ENCODE measurements at regions of chr3 and their contacts with region 1.

Region 1: GRCh38 chr3:157088601-157089454 is 71.1 kb downstream of the CCNL1 start:
- DNase-seq: peak; percentile 95
- ATAC-seq: peak; percentile 96
- H3K4me3 Mint-ChIP-seq: peak overlapping the region; percentile 80
- H3K27ac Mint-ChIP-seq: peak overlapping the region; percentile 94
- H3K4me1 Mint-ChIP-seq: peaks cover 51% of the 10 kb centered on the region
- H3K27me3 Mint-ChIP-seq: no peaks in the 10 kb centered on the region

Region 2: GRCh38 chr3:157021684-157022083 is 67.1 kb before region 1 on chr3:
- CTCF ChIA-PET with region 1: no interaction called
- POLR2A ChIA-PET with region 1: no interaction called
- DNase-seq: no peak
- ATAC-seq: no peak
- H3K4me3 Mint-ChIP-seq: no peak overlapping the region
- H3K27ac Mint-ChIP-seq: no peak overlapping the region
- H3K4me1 Mint-ChIP-seq: peaks cover 8% of the 10 kb centered on the region
- H3K27me3 Mint-ChIP-seq: peaks cover 4% of the 10 kb centered on the region

Region 3: DNA sequence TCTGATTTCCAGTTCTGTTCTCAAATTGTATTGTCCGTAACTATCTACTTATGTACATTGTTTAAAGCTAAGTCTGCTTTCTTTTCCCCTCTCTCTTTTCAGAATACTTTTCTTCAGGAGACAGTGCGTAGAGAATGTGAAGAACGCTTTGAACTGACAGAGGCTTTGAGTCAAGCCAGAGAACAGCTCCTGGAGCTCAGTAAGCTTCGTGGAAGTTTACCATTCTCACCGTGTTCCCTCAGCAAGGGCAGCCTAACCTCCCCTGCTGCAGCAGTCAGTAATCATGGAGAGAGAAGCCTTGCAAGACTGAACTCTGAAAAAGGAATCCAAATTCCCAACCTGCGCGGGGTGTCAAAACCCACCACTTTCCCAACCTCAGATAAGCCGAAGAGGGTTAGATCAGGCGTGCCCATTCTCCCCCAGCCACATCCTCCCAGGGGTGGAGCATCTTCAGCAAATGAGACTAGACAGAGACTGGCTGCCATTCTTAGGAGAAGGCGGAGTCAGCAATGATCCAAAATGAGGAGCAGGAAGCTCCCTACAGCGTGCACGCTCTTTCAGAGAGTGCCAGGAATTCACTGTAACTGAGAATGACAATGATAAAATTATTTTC is 43.5 kb before region 1 on chr3:
- CTCF ChIA-PET with region 1: no interaction called
- POLR2A ChIA-PET with region 1: no interaction called
- DNase-seq: no peak
- ATAC-seq: no peak
- H3K4me3 Mint-ChIP-seq: no peak overlapping the region
- H3K27ac Mint-ChIP-seq: no peak overlapping the region
- H3K4me1 Mint-ChIP-seq: no peaks in the 10 kb centered on the region
- H3K27me3 Mint-ChIP-seq: peaks cover 18% of the 10 kb centered on the region

Region 4: GRCh38 chr3:157104928-157105652 is 16.3 kb after region 1 on chr3:
- CTCF ChIA-PET with region 1: interaction called, 78 read pairs
- POLR2A ChIA-PET with region 1: interaction called, 9 read pairs
- DNase-seq: no peak
- ATAC-seq: no peak
- H3K4me3 Mint-ChIP-seq: no peak overlapping the region
- H3K27ac Mint-ChIP-seq: no peak overlapping the region
- H3K4me1 Mint-ChIP-seq: peaks cover 22% of the 10 kb centered on the region
- H3K27me3 Mint-ChIP-seq: no peaks in the 10 kb centered on the region

Region 5: GRCh38 chr3:157113832-157114505 is 25.1 kb after region 1 on chr3:
- CTCF ChIA-PET with region 1: interaction called, 78 read pairs
- POLR2A ChIA-PET with region 1: interaction called, 9 read pairs
- DNase-seq: no peak
- ATAC-seq: no peak
- H3K4me3 Mint-ChIP-seq: no peak overlapping the region
- H3K27ac Mint-ChIP-seq: no peak overlapping the region
- H3K4me1 Mint-ChIP-seq: peaks cover 8% of the 10 kb centered on the region
- H3K27me3 Mint-ChIP-seq: peaks cover 3% of the 10 kb centered on the region

Region 6: GRCh38 chr3:157122116-157122515 is 33.3 kb after region 1 on chr3:
- CTCF ChIA-PET with region 1: interaction called, 301 read pairs
- POLR2A ChIA-PET with region 1: interaction called, 69 read pairs
- DNase-seq: no peak
- ATAC-seq: no peak
- H3K4me3 Mint-ChIP-seq: no peak overlapping the region
- H3K27ac Mint-ChIP-seq: no peak overlapping the region
- H3K4me1 Mint-ChIP-seq: peaks cover 16% of the 10 kb centered on the region
- H3K27me3 Mint-ChIP-seq: no peaks in the 10 kb centered on the region

Region 7: GRCh38 chr3:157130467-157131251 is 41.8 kb after region 1 on chr3:
- CTCF ChIA-PET with region 1: interaction called, 301 read pairs
- POLR2A ChIA-PET with region 1: interaction called, 69 read pairs
- DNase-seq: peak; percentile 78
- ATAC-seq: peak; percentile 41
- H3K4me3 Mint-ChIP-seq: peak overlapping the region; percentile 50
- H3K27ac Mint-ChIP-seq: peak overlapping the region; percentile 92
- H3K4me1 Mint-ChIP-seq: peaks cover 89% of the 10 kb centered on the region
- H3K27me3 Mint-ChIP-seq: no peaks in the 10 kb centered on the region

Measured in activated CD8-positive, alpha-beta T cell treated with anti-CD3 and anti-CD28 coated beads, Interleukin-2, amount 10 ng/mL, durations not matched to agents 7 days and 5 days (primary cell).